ENCODE measurements at regions of chr3 and their contacts with region 1.

Region 1: DNA sequence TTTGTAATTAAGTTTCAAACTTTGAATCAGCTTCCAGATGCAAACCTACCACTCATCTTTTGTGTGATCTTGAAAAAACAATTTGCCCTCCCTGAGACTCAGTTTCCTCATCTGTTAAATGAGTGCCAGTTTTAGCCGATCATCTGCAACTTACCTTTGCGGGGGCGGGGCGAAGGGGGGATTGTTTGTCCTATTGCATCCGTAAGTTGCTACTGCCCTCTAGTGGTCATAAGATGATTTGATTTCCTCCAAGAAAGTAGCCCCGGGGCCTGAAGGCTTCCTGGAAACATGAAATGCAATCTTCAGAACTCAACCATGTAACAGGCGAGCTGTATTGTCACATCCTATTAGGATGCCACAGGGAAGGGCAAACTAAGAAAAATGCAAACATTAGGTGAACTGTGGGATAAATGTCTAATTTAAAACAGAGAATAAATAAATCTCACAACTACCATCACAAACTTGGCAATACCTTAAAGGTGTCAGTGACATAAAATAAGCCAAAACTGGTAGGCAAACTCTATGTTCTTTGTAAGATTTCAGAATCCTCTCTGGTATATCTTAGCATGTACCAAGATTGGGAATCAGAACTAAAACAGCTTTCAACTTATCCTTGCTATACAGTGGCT is 63.5 kb upstream of the CLDN18 start:
- DNase-seq: no peak
- H3K4me3 ChIP-seq: no peak overlapping the region
- H3K27me3 ChIP-seq: no peaks in the 10 kb centered on the region
- CTCF ChIP-seq: peak; percentile 66

Region 2: DNA sequence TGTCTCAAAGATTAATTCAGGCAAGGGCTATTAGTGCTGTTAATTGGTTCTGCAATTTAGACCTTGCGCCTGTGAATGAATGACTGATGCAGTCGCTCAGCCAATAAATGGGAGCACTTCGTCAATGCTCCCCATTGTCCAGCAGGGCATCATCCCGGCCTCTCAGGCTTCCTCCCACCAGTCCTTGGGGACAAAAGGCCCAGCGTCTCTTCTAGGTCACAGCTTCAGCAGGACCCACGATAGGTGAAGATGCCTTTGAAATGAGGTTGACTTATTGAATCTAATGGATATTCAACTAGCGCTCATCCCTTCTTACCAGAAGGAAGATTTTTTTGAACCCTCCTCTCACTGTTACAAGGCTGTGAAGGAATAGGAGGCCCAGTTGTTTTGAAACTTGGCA is 15.8 kb after region 1 on chr3:
- CTCF ChIA-PET with region 1: interaction called, 36 read pairs
- POLR2A ChIA-PET with region 1: no interaction called
- DNase-seq: no peak
- H3K4me3 ChIP-seq: no peak overlapping the region
- H3K27me3 ChIP-seq: no peaks in the 10 kb centered on the region; the same call in 1 of the 2 replicates
- CTCF ChIP-seq: no peak

Region 3: GRCh38 chr3:137970914-137971831 is 24.7 kb after region 1 on chr3:
- CTCF ChIA-PET with region 1: interaction called, 10 read pairs
- POLR2A ChIA-PET with region 1: no interaction called
- DNase-seq: no peak
- H3K4me3 ChIP-seq: no peak overlapping the region
- H3K27me3 ChIP-seq: 0 out of 2 replicates have a peak, but pooled peaks cover 2% of the 10 kb centered on the region
- CTCF ChIP-seq: peak; percentile 98